Adrenal gland (tissue), 19 donors: ENCODE measurements at regions of chr4 and their contacts with region 1.

Region 1: GRCh38 chr4:48085821-48086607 is 48.0 kb downstream of the TXK start:
- DNase-seq: no peak
- H3K4me3 ChIP-seq: no peak overlapping the region
- H3K27ac ChIP-seq: no peak overlapping the region
- H3K4me1 ChIP-seq: no peaks in the 10 kb centered on the region
- H3K27me3 ChIP-seq: no peaks in the 10 kb centered on the region
- CTCF ChIP-seq: no peak
- POLR2A ChIP-seq: no peak

Region 2: GRCh38 chr4:48002267-48002666 is 83.7 kb before region 1 on chr4:
- intact Hi-C with region 1: loop called (anchors 5 kb)
- DNase-seq: no peak
- H3K4me3 ChIP-seq: no peak overlapping the region
- H3K27ac ChIP-seq: no peak overlapping the region
- H3K4me1 ChIP-seq: no peaks in the 10 kb centered on the region
- H3K27me3 ChIP-seq: no peaks in the 10 kb centered on the region
- CTCF ChIP-seq: no peak
- POLR2A ChIP-seq: no peak